Lower leg skin (tissue), 4 donors: ENCODE measurements at regions of chr10 and their contacts with region 1.

Region 1: GRCh38 chr10:26556748-26557640 is 118.9 kb downstream of the APBB1IP start:
- DNase-seq: no peak
- H3K4me3 ChIP-seq: no peak overlapping the region
- CTCF ChIP-seq: peak in 1 of 3 donors; percentile 50
- POLR2A ChIP-seq: no peak

Region 2: GRCh38 chr10:25451401-25451800 is 1105.6 kb before region 1 on chr10:
- intact Hi-C with region 1: no loop called
- DNase-seq: no peak
- H3K4me3 ChIP-seq: no peak overlapping the region
- CTCF ChIP-seq: no peak
- POLR2A ChIP-seq: no peak

Region 3: DNA sequence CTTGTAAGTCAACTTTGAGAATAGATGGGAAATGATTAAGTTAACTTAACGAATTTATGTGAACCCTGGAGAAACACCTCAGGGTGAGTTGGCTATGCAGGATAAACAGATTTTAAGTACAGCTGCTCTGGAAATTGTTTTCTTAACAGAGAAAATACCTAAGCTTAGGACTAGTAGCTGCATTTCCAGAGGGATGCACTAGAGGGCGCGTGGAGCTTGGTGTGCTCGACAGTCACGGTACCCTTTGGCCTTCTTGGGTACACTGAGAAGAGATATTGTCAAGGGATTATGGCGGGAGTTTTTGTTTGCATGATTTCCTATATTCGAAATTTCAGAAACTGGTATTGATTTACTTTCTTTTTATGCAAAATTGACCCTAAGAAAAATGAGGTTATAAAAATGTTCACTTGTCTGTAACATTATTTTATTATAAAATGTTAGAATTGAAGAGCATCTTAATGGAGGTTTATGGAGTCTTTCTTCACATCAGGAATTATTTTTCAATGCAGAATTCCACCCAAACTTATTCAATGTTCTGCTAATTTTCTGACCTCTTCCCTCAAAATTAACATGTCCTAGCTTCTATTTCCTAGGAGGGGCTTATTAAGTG is 681.3 kb before region 1 on chr10:
- intact Hi-C with region 1: loop called (anchors 10 kb)
- DNase-seq: peak; percentile 42 to 91
- H3K4me3 ChIP-seq: no peak overlapping the region
- CTCF ChIP-seq: no peak
- POLR2A ChIP-seq: no peak

Region 4: GRCh38 chr10:26341701-26342100 is 215.3 kb before region 1 on chr10:
- intact Hi-C with region 1: loop called (anchors 10 kb)
- DNase-seq: no peak
- H3K4me3 ChIP-seq: no peak overlapping the region
- CTCF ChIP-seq: no peak
- POLR2A ChIP-seq: no peak

Region 5: DNA sequence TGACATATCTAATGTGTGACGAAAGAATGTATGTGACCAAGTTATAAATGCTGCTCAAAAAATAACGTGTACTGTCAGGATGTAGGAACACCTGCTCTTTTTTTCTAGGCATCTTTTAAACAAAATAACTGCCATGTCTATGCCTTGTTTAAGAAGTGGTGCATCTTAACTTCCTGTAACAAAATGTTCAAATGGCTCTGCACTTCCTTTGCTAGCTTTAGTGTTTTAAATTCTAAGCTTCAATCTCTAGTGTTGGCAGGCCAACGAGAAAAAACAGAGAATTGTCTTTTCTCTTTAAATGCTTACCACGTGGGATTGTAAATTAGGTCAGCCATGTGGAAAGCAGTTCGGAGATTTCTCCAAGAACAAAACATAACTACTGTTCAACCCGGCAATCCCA is 125.9 kb after region 1 on chr10:
- intact Hi-C with region 1: no loop called
- DNase-seq: no peak
- H3K4me3 ChIP-seq: no peak overlapping the region
- CTCF ChIP-seq: no peak
- POLR2A ChIP-seq: no peak

Region 6: DNA sequence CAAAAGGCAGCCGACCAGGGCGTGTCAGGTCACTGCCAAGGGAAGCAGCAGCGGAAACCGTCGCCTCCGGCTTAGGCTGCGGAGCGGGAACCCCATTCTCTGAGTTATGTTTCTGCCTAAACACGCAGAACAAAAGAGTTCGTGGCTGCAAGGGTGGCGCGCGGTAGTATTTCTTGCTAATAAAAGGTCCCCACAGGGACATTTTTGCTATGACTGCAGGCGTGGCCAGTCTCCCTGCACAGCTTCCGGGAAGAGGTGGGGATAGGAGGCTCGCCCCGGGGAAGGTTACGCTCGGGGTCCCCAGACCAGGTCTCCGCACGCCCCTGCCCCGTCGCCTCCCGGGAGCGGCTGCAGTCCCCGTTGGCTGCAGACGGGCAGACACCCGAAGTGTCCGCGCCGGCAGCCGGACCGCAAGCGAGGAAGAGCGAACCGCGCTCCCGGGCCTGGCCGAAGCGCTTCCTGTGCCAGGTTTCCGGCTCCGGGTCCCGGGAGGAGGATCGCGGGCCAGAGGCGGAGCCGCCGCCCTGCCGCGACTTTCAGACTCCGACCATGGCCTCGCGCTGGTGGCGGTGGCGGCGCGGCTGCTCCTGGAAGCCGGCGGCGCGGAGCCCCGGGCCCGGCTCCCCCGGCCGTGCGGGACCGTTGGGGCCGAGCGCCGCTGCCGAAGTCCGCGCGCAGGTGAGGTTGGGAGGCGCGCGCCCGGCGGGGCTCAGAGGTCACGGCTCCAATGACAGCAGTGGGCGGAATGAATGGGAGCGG is 140.3 kb after region 1 on chr10 and contains the start of gene PDSS1:
- intact Hi-C with region 1: no loop called
- DNase-seq: peak; percentile 46 to 94
- H3K4me3 ChIP-seq: peak within 1 kb of the TSS; percentile 89
- CTCF ChIP-seq: no peak
- POLR2A ChIP-seq: no peak
- total RNA-seq, gene PDSS1: 1.4 to 4.7 (median 2.7) TPM

Region 7: GRCh38 chr10:27088119-27089044 is 531.4 kb after region 1 on chr10:
- intact Hi-C with region 1: no loop called
- DNase-seq: no peak
- H3K4me3 ChIP-seq: no peak overlapping the region
- CTCF ChIP-seq: no peak
- POLR2A ChIP-seq: no peak